ENCODE measurements at regions of chr10 and their contacts with region 1.

Region 1: DNA sequence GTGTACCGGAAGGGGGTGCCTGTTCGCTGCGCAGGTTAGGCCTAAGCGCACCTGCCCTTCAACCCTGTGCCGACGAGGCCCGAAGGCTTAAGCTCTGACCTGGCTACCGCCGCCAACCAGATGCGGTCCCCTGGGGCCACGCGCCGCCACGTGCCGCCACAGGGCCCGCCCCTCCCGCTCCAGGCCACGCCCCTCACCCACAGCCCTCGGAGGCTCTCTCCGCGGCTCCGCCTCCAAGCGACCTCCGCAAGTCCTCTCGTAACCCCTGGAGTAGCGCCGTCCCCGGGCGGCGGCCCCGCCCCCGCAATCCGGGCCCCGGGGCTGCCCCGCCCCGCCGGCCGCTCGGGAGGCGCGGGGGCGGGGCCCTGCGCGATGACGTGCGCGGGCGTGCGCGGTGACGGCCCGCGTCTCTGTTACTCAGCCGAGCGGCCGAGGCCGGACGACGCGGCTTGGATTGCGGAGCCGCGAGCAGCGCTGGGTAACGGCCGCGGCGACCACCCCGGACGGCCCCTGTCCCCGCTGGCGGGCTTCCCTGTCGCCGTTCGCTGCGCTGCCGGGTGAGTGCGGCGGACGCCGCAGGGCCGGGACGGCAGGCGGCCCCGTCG is at the start of gene MAPK8:
- DNase-seq: peak; percentile 93
- ATAC-seq: peak; percentile 86
- H3K4me3 Mint-ChIP-seq: peak within 1 kb of the TSS; percentile 72
- H3K27ac Mint-ChIP-seq: peak within 1 kb of the TSS; percentile 58
- H3K4me1 Mint-ChIP-seq: peaks cover 30% of the 10 kb centered on the region
- H3K27me3 Mint-ChIP-seq: no peaks in the 10 kb centered on the region
- total RNA-seq, gene MAPK8: 35.7 to 40.0 TPM

Region 2: GRCh38 chr10:48266528-48266927 is 39.8 kb before region 1 on chr10:
- CTCF ChIA-PET with region 1: no interaction called
- POLR2A ChIA-PET with region 1: no interaction called
- intact Hi-C with region 1: no loop called
- DNase-seq: peak; percentile 33
- ATAC-seq: peak; percentile 80
- H3K4me3 Mint-ChIP-seq: no peak overlapping the region
- H3K27ac Mint-ChIP-seq: no peak overlapping the region
- H3K4me1 Mint-ChIP-seq: peaks cover 2% of the 10 kb centered on the region
- H3K27me3 Mint-ChIP-seq: peaks cover 9% of the 10 kb centered on the region

Region 3: DNA sequence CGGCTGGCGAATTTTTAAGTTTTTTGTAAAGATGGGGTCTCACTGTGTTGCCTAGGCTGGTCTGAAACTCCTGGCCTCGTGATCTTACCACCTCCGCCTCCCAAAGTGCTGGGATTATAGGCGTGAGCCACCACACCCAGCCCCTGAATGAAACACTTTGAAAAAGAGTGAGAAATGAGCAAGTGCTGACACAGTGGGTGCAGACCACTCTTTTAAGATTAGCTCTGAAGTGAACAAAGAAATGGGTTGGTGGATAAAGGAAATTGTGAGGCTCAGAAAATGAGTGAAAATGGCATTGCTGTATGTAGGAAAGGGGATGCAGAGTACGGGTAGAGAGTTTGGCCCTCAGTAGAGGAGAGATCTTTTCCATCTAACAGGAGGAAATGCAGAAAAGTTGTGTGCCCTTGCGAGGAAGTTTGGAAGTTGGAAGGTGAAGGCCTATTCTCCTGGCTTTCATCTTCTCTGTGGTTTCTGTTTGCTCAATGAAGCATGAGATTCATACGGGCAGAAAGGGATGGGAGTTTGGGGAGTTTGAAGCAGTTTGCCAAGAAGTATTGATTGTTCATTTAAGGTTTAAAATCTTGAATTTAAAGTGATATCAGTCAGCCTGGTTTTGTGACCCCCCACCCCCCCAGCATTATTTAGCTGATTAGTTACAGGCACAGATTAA is 11.1 kb after region 1 on chr10:
- CTCF ChIA-PET with region 1: interaction called, 11 read pairs
- POLR2A ChIA-PET with region 1: no interaction called
- intact Hi-C with region 1: loop called in 1 of 2 experiments (anchors 1 kb)
- DNase-seq: no peak
- ATAC-seq: peak; percentile 36
- H3K4me3 Mint-ChIP-seq: no peak overlapping the region
- H3K27ac Mint-ChIP-seq: no peak overlapping the region
- H3K4me1 Mint-ChIP-seq: peaks cover 13% of the 10 kb centered on the region
- H3K27me3 Mint-ChIP-seq: no peaks in the 10 kb centered on the region

Region 4: GRCh38 chr10:48390933-48391845 is 84.8 kb after region 1 on chr10:
- CTCF ChIA-PET with region 1: no interaction called
- POLR2A ChIA-PET with region 1: no interaction called
- intact Hi-C with region 1: loop called in 1 of 2 experiments (anchors 2 kb)
- DNase-seq: peak; percentile 33
- ATAC-seq: peak; percentile 71
- H3K4me3 Mint-ChIP-seq: no peak overlapping the region
- H3K27ac Mint-ChIP-seq: peak overlapping the region; percentile 43
- H3K4me1 Mint-ChIP-seq: peaks cover 58% of the 10 kb centered on the region
- H3K27me3 Mint-ChIP-seq: no peaks in the 10 kb centered on the region

Region 5: DNA sequence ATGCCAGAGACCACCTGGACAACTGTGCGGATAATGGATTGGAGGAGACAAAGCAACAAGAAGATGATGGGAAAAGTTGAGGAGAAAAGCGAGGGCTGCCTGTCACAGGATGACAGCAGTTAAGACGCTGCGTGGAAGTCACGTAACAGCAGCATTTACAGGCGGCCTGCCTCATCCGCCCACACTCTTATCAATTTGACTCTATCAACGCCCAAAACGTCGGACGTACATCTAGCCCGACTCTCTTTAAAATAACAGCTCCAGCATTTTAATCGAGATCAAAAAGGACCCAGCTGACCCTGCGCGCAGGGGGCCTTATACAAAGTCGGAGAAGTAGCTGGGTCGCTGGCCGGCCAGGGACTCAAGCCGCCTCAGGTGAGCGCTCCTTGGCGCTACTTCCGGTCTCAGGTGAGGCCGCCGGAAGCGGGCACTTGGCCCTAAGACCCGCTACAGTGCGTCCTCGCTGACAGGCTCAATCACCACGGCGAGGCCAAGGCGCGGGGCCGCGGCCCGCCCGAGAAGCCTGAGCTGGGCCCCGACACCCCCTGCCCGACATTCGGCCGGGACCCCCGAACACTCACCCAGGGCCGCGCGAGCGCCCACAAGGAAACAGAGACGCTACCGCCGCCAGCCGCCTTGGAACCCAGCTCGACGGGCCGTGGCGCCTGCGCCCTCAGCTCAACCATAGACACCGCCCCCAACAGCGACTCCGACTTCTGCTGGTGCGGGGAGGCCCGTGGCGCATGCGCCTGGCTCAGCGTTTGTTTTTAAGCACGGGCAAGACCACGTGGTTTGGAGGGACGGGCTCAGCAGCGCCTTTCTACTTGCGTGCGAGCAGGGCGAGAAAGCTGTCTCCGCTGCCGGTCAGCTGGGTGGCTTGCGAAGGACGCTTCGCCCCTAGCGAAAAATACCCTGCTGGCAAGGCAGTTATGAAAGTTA is 1232.3 kb after region 1 on chr10 and contains the start of gene ERCC6:
- CTCF ChIA-PET with region 1: no interaction called
- POLR2A ChIA-PET with region 1: no interaction called
- intact Hi-C with region 1: loop called (anchors 1 to 5 kb)
- DNase-seq: peak; percentile 98
- ATAC-seq: peak; percentile 96
- H3K4me3 Mint-ChIP-seq: peak within 1 kb of the TSS; percentile 78
- H3K27ac Mint-ChIP-seq: peak within 1 kb of the TSS; percentile 90
- H3K4me1 Mint-ChIP-seq: peaks cover 34% of the 10 kb centered on the region
- H3K27me3 Mint-ChIP-seq: peaks cover 9% of the 10 kb centered on the region
- total RNA-seq, gene ERCC6: 15.0 to 15.8 TPM

Measured in activated CD4-positive, alpha-beta T cell treated with anti-CD3 and anti-CD28 coated beads for 36 hours (primary cell).